ENCODE measurements at regions of chr12 and their contacts with region 1.

Region 1: DNA sequence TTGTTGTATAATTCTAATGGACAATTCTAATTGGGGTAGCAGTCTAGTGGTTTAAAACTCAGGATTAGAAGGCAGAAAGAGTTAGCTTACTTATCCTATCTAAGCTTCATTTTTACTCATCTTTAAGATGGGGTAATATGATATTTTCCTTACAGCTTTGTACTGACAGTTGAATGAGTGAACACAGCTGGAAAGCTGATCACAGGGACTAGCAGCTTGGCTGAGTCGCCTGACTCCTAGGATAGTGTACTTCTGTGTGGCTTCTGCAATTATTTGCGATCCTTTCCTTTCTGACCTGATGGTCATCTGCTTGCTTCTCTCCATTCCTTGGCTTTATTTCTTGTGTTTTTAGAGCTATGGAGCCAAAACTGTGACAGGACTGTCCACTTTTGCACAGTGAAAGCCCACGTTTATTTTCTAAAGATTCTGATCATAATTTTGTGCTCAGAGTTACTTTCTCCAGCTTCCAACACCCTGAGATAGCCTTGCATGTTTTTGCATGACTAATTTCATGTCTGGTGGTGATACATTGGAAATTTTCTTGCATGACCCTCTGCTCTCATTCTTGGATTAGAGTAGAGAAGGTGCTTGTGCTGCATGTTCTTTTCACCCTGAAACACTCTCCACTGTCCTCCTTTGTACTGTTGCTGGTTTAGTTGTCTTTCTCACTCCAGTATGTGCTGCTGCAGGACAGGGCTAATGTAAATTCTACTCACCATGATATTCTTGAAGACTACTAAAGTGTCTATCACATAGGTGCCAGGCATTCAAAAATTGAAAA is 377.0 kb upstream of the ATP2B1 start:
- DNase-seq: no peak
- ATAC-seq: no peak
- H3K4me3 ChIP-seq: no peak overlapping the region
- H3K4me3 Mint-ChIP-seq: no peak overlapping the region
- H3K27ac ChIP-seq: no peak overlapping the region
- H3K27ac Mint-ChIP-seq: no peak overlapping the region
- H3K4me1 ChIP-seq: no peaks in the 10 kb centered on the region
- H3K4me1 Mint-ChIP-seq: peaks cover under 1% of the 10 kb centered on the region
- H3K27me3 ChIP-seq: no peaks in the 10 kb centered on the region
- H3K27me3 Mint-ChIP-seq: no peaks in the 10 kb centered on the region
- CTCF ChIP-seq: no peak

Region 2: GRCh38 chr12:89862511-89863179 is 223.0 kb before region 1 on chr12:
- CTCF ChIA-PET with region 1: no interaction called
- POLR2A ChIA-PET with region 1: no interaction called
- intact Hi-C with region 1: no loop called
- DNase-seq: peak in 7 of 9 experiments; percentile 27 to 82 (median 50)
- ATAC-seq: peak; percentile 30
- H3K4me3 ChIP-seq: peak overlapping the region; percentile 29 to 46
- H3K4me3 Mint-ChIP-seq: peak overlapping the region; percentile 80
- H3K27ac ChIP-seq: peak overlapping the region; percentile 79 to 88
- H3K27ac Mint-ChIP-seq: peak overlapping the region; percentile 93
- H3K4me1 ChIP-seq: peaks cover 36% of the 10 kb centered on the region
- H3K4me1 Mint-ChIP-seq: peaks cover 54% of the 10 kb centered on the region
- H3K27me3 ChIP-seq: no peaks in the 10 kb centered on the region
- H3K27me3 Mint-ChIP-seq: no peaks in the 10 kb centered on the region
- CTCF ChIP-seq: no peak

Region 3: GRCh38 chr12:90102957-90103652 is 17.4 kb after region 1 on chr12:
- CTCF ChIA-PET with region 1: interaction called, 5 read pairs
- POLR2A ChIA-PET with region 1: no interaction called
- intact Hi-C with region 1: loop called in 1 of 2 experiments (anchors 2 kb)
- DNase-seq: peak in 3 of 9 experiments; percentile 6 to 65 (median 53)
- ATAC-seq: peak; percentile 56
- H3K4me3 ChIP-seq: no peak overlapping the region
- H3K4me3 Mint-ChIP-seq: peak overlapping the region; percentile 68
- H3K27ac ChIP-seq: no peak overlapping the region
- H3K27ac Mint-ChIP-seq: no peak overlapping the region
- H3K4me1 ChIP-seq: no peaks in the 10 kb centered on the region
- H3K4me1 Mint-ChIP-seq: peaks cover 4% of the 10 kb centered on the region
- H3K27me3 ChIP-seq: no peaks in the 10 kb centered on the region
- H3K27me3 Mint-ChIP-seq: peaks cover 2% of the 10 kb centered on the region
- CTCF ChIP-seq: peak; percentile 70

Measured in CD8-positive, alpha-beta T cell (primary cell).